Heart right ventricle (tissue), 16 donors: ENCODE measurements at regions of chr1 and their contacts with region 1.

Region 1: GRCh38 chr1:169794530-169795416 is at the start of gene METTL18:
- DNase-seq: peak; percentile 87 to 94
- ATAC-seq: peak; percentile 99 to 100 (median 100)
- H3K4me3 ChIP-seq: peak within 1 kb of the TSS; percentile 59 to 82 (median 68)
- H3K27ac ChIP-seq: peak within 1 kb of the TSS; percentile 62 to 97 (median 89)
- H3K4me1 ChIP-seq: peaks cover 0 to 21% (median 16%) of the 10 kb centered on the region in 9 donors
- H3K27me3 ChIP-seq: no peaks in the 10 kb centered on the region
- CTCF ChIP-seq: no peak
- total RNA-seq, gene METTL18: 2.2 to 6.6 (median 5.6) TPM

Region 2: GRCh38 chr1:169739980-169740379 is 54.8 kb before region 1 on chr1:
- intact Hi-C with region 1: loop called in 1 of 10 experiments (anchors 10 kb)
- DNase-seq: peak in 1 of 2 donors; percentile 25
- ATAC-seq: peak in 7 of 8 donors; percentile 27 to 76 (median 65)
- H3K4me3 ChIP-seq: peak overlapping the region in 1 of 10 donors; percentile 1
- H3K27ac ChIP-seq: peak overlapping the region in 7 of 10 donors; percentile 32 to 72 (median 60)
- H3K4me1 ChIP-seq: peaks cover 0 to 36% (median 16%) of the 10 kb centered on the region in 9 donors
- H3K27me3 ChIP-seq: no peaks in the 10 kb centered on the region
- CTCF ChIP-seq: no peak

Region 3: DNA sequence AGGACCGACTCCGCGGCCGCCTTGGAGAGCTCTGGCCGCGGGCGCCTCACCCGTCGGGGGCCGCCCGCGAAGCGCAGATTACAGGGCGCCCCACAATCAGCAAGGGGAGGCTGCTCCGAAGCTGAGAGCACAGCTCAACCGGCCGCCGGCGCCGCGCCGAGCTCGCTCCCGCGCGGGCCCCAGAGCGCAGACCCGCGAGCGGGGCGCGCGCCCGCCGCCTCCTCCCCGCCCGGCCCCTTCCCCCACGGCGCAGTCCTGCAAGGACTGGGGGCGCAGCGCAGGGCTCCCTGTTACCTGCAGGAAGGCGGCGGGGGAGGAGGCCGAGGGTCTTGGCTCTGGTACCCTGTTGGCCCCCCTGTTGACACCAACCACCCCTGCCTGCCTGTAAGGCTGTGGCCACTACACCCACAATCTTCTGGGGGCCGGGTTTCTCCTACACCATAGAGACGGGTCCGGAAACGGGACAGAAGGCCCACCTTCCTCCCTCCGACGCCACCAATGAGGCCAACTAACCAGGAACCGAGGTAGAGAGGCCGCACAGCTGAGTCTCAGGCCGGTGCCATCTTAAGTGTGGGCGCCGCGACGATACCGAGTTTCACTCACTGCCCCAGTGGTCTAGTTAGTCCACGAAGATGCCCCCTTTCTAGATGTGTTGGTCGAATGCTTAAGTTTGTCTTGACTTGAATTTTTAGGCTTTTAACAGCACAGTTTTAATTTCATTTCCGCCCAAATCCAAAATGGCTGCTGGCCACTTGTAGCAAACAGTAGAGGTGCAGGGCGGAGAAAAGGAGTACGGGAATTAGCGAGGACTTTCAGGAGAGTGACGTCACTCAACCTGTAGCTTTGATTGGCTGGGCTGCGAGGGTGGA is 99.0 kb after region 1 on chr1 and contains the start of gene SCYL3:
- intact Hi-C with region 1: loop called in 2 of 10 experiments (anchors 2 to 5 kb)
- DNase-seq: peak; percentile 87 to 97
- ATAC-seq: peak; percentile 98 to 100 (median 99)
- H3K4me3 ChIP-seq: peak within 1 kb of the TSS; percentile 85 to 99 (median 96)
- H3K27ac ChIP-seq: peak within 1 kb of the TSS; percentile 86 to 99 (median 97)
- H3K4me1 ChIP-seq: peaks cover 0 to 29% (median 26%) of the 10 kb centered on the region in 9 donors
- H3K27me3 ChIP-seq: peaks cover 0 to 9% (median 0%) of the 10 kb centered on the region in 7 donors
- CTCF ChIP-seq: peak in 1 of 9 donors; percentile 12
- total RNA-seq, gene SCYL3: 3.3 to 8.9 (median 5.7) TPM

Region 4: GRCh38 chr1:170619241-170620028 is 824.7 kb after region 1 on chr1:
- intact Hi-C with region 1: no loop called
- DNase-seq: no peak
- ATAC-seq: peak in 2 of 8 donors; percentile 23 to 33
- H3K4me3 ChIP-seq: no peak overlapping the region
- H3K27ac ChIP-seq: peak overlapping the region in 3 of 10 donors; percentile 1 to 78 (median 29)
- H3K4me1 ChIP-seq: peaks cover 0 to 32% (median 23%) of the 10 kb centered on the region in 9 donors
- H3K27me3 ChIP-seq: no peaks in the 10 kb centered on the region
- CTCF ChIP-seq: no peak